ENCODE measurements at regions of chr6 and their contacts with region 1.

Region 1: GRCh38 chr6:96521644-96522464 is at the start of gene UFL1:
- DNase-seq: peak; percentile 92 to 98 (median 96)
- ATAC-seq: peak; percentile 89
- H3K4me3 ChIP-seq: peak within 1 kb of the TSS; percentile 87 to 98
- H3K4me3 Mint-ChIP-seq: peak within 1 kb of the TSS; percentile 100
- H3K27ac ChIP-seq: peak within 1 kb of the TSS; percentile 98 to 99
- H3K27ac Mint-ChIP-seq: peak within 1 kb of the TSS; percentile 100
- H3K4me1 ChIP-seq: peaks cover 20% of the 10 kb centered on the region
- H3K4me1 Mint-ChIP-seq: peaks cover 37% of the 10 kb centered on the region
- H3K27me3 ChIP-seq: no peaks in the 10 kb centered on the region
- H3K27me3 Mint-ChIP-seq: no peaks in the 10 kb centered on the region
- CTCF ChIP-seq: no peak
- total RNA-seq, gene UFL1: 18.0 to 20.3 TPM

Region 2: GRCh38 chr6:95577304-95578105 is 944.3 kb before region 1 on chr6 and contains the start of gene MANEA:
- CTCF ChIA-PET with region 1: no interaction called
- POLR2A ChIA-PET with region 1: interaction called, 3 read pairs
- intact Hi-C with region 1: loop called (anchors 2 to 5 kb)
- DNase-seq: peak; percentile 69 to 91 (median 81)
- ATAC-seq: peak; percentile 84
- H3K4me3 ChIP-seq: peak within 1 kb of the TSS; percentile 70 to 89
- H3K4me3 Mint-ChIP-seq: peak within 1 kb of the TSS; percentile 94
- H3K27ac ChIP-seq: peak within 1 kb of the TSS; percentile 85 to 89
- H3K27ac Mint-ChIP-seq: peak within 1 kb of the TSS; percentile 98
- H3K4me1 ChIP-seq: peaks cover 30% of the 10 kb centered on the region
- H3K4me1 Mint-ChIP-seq: peaks cover 62% of the 10 kb centered on the region
- H3K27me3 ChIP-seq: no peaks in the 10 kb centered on the region
- H3K27me3 Mint-ChIP-seq: no peaks in the 10 kb centered on the region
- CTCF ChIP-seq: no peak
- total RNA-seq, gene MANEA: 5.3 to 6.0 TPM

Region 3: DNA sequence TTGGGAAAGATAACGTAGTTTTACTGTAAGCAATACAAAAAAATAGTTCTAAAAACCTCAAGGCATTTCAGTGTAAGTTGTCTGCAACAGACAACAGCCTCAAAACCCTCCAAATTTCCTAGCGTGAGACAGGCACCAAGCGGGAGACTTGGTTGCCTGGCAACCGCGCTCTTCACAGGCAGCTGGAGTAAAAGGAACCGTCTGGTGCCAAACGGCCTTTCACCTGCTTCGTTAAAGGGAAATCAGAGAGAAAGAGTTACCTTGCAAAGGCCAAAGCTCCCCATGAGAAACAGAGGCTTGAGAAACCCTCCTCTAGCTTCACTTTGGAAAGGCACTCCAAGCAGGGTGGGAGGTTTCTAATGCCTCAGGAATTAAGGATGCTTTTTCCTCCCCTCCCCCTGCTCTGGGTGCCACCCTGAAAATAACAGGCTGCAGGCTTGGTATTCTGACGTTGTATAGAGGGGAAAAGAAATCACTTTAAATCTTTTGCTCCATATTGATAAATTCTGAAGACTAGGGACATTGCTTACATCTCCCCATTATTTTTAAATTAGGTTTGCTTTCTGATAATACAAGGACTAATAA is 130.0 kb before region 1 on chr6:
- CTCF ChIA-PET with region 1: no interaction called
- POLR2A ChIA-PET with region 1: no interaction called
- intact Hi-C with region 1: loop called in 1 of 2 experiments (anchors 5 kb)
- DNase-seq: peak in 2 of 9 experiments; percentile 12 to 27
- ATAC-seq: no peak
- H3K4me3 ChIP-seq: no peak overlapping the region
- H3K4me3 Mint-ChIP-seq: no peak overlapping the region
- H3K27ac ChIP-seq: no peak overlapping the region
- H3K27ac Mint-ChIP-seq: no peak overlapping the region
- H3K4me1 ChIP-seq: no peaks in the 10 kb centered on the region
- H3K4me1 Mint-ChIP-seq: peaks cover 4% of the 10 kb centered on the region
- H3K27me3 ChIP-seq: no peaks in the 10 kb centered on the region
- H3K27me3 Mint-ChIP-seq: peaks cover 7% of the 10 kb centered on the region
- CTCF ChIP-seq: no peak

Region 4: DNA sequence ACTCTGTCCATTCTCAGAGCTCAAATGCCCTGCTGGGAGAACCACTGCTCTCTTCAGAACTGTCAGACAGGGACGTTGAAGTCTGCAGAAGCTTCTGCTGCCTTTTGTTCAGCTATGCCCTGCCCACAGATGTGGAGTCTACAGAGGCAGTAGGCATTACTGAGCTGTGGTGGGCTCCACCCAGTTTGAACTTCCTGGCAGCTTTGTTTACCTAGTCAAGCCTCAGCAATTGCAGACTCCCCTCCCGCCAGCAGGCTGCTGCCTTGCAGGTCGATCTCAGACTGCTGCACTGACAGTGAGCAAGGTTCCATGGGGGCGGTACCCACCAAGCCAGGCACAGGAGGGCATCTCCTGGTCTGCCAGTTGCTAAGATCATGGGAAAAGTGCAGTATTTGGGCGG is 22.1 kb before region 1 on chr6:
- CTCF ChIA-PET with region 1: interaction called, 3 read pairs
- POLR2A ChIA-PET with region 1: interaction called, 7 read pairs
- intact Hi-C with region 1: loop called (anchors 1 kb)
- DNase-seq: peak; percentile 36 to 87 (median 74)
- ATAC-seq: peak; percentile 97
- H3K4me3 ChIP-seq: peak overlapping the region in 1 of 2 experiments; percentile 20
- H3K4me3 Mint-ChIP-seq: peak overlapping the region; percentile 58
- H3K27ac ChIP-seq: peak overlapping the region in 1 of 2 experiments; percentile 43
- H3K27ac Mint-ChIP-seq: peak overlapping the region; percentile 88
- H3K4me1 ChIP-seq: peaks cover 14% of the 10 kb centered on the region
- H3K4me1 Mint-ChIP-seq: peaks cover 39% of the 10 kb centered on the region
- H3K27me3 ChIP-seq: no peaks in the 10 kb centered on the region
- H3K27me3 Mint-ChIP-seq: no peaks in the 10 kb centered on the region
- CTCF ChIP-seq: peak; percentile 27

Region 5: GRCh38 chr6:96542702-96543101 is 20.8 kb after region 1 on chr6:
- CTCF ChIA-PET with region 1: interaction called, 4 read pairs
- POLR2A ChIA-PET with region 1: interaction called, 3 read pairs
- intact Hi-C with region 1: loop called in 1 of 2 experiments (anchors 2 kb)
- DNase-seq: peak in 2 of 9 experiments; percentile 26 to 38
- ATAC-seq: no peak
- H3K4me3 ChIP-seq: no peak overlapping the region
- H3K4me3 Mint-ChIP-seq: no peak overlapping the region
- H3K27ac ChIP-seq: no peak overlapping the region
- H3K27ac Mint-ChIP-seq: no peak overlapping the region
- H3K4me1 ChIP-seq: no peaks in the 10 kb centered on the region
- H3K4me1 Mint-ChIP-seq: no peaks in the 10 kb centered on the region
- H3K27me3 ChIP-seq: no peaks in the 10 kb centered on the region
- H3K27me3 Mint-ChIP-seq: no peaks in the 10 kb centered on the region
- CTCF ChIP-seq: peak; percentile 58

Region 6: DNA sequence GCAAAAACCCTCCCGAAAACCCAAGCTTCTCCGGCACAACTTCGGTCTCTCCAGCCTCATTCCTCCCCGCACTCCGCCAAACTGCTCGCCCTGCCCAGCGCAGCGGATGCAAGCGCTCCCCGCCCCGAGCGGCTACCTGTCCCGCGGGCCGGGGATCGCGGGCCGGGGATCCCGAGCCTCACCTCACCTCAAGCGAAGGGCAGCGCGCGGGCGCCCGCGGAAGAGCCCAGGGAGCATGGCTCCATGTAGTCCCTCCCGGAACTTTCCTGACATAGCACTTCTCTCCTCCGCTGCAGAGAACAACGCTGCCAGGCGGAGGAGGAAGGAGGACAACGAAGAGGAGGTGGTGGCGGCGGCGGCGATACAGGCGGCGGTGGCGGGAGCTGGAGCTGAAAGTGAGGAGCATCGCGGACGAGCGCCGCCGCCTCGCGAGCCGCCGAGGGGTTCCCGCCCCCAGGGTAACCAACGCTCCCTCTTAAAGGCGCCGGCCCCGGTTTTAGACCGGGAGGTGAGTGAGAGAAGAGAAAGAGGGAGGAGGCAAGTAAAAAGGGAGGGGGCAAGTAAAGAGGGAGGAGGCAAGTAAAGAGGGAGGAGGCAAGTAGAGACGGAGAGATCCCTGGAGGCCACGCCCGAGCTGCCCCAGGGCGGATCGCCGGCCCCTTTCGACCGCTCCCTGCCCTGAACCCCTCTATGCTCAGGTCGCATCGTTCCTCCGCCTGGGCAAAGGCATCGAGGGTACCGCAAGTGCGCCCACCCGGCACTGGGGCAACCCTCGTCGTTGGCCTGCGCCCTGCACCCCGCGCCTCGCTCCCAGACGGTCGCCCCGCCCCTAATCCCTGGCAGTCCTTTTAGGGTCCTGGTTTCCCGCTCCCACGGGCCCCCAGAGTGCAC is 315.5 kb after region 1 on chr6 and contains the start of gene GPR63:
- CTCF ChIA-PET with region 1: no interaction called
- POLR2A ChIA-PET with region 1: interaction called, 3 read pairs
- intact Hi-C with region 1: loop called in 1 of 2 experiments (anchors 5 kb)
- DNase-seq: peak in 8 of 9 experiments; percentile 24 to 76 (median 55)
- ATAC-seq: peak; percentile 79
- H3K4me3 ChIP-seq: peak within 1 kb of the TSS; percentile 65 to 74
- H3K4me3 Mint-ChIP-seq: peak within 1 kb of the TSS; percentile 82
- H3K27ac ChIP-seq: no peak within 1 kb of the TSS
- H3K27ac Mint-ChIP-seq: peak within 1 kb of the TSS; percentile 6
- H3K4me1 ChIP-seq: peaks cover 15% of the 10 kb centered on the region
- H3K4me1 Mint-ChIP-seq: peaks cover 16% of the 10 kb centered on the region
- H3K27me3 ChIP-seq: peaks cover 0 to 12% of the 10 kb centered on the region in 2 experiments
- H3K27me3 Mint-ChIP-seq: peaks cover 44% of the 10 kb centered on the region
- CTCF ChIP-seq: no peak
- total RNA-seq, gene GPR63: not detected

Region 7: GRCh38 chr6:96923871-96924493 is 402.1 kb after region 1 on chr6:
- CTCF ChIA-PET with region 1: no interaction called
- POLR2A ChIA-PET with region 1: interaction called, 12 read pairs
- intact Hi-C with region 1: loop called (anchors 1 to 2 kb)
- DNase-seq: peak in 3 of 9 experiments; percentile 1 to 83 (median 75)
- ATAC-seq: no peak
- H3K4me3 ChIP-seq: peak overlapping the region; percentile 64 to 76
- H3K4me3 Mint-ChIP-seq: peak overlapping the region; percentile 96
- H3K27ac ChIP-seq: peak overlapping the region; percentile 92 to 96
- H3K27ac Mint-ChIP-seq: peak overlapping the region; percentile 98
- H3K4me1 ChIP-seq: peaks cover 32% of the 10 kb centered on the region
- H3K4me1 Mint-ChIP-seq: peaks cover 32% of the 10 kb centered on the region
- H3K27me3 ChIP-seq: no peaks in the 10 kb centered on the region
- H3K27me3 Mint-ChIP-seq: no peaks in the 10 kb centered on the region
- CTCF ChIP-seq: no peak

Measured in CD8-positive, alpha-beta T cell (primary cell).